HEK293 (cell line): ENCODE measurements at regions of chr5 and their contacts with region 1.

Region 1: DNA sequence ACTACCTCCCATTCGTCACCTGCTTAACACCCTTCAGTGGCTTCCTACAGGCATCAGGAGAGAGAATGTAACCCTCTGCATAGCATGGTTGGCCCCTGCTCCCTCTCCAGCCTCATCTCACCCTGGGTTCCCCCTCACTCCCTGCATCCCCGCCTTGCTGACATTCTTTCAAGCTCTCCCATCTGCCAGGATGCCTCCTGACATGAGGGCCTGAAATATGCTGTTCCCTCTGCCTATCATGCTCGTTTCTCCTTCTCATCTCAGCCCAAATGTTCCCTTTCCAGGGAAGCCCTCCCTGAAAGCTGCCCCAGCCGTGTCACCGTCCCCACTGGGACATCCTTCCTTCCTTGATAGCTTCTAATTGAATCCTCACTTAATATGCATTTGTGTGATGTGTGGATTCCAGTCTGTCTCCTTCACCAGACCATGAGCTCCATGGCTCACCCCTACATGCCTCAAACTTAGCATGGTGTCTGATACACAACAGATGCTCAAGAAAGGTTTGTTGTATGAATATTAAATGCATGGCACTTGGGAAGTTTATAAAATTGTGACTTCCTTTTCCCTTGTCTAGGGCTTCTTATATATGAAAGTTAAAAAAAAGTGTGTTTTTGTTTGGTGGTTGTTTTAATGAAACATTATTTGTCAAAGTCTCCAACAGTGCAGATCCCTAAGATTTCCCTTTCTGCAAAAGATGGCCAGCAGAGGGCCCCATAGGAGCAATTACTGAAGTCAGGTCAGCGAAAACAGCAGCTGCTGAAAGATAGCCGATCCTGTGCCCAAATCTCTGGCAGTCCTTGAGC is 7.3 kb upstream of the C5orf58 start:
- H3K4me3 ChIP-seq: no peak overlapping the region
- H3K27ac ChIP-seq: no peak overlapping the region
- H3K4me1 ChIP-seq: no peaks in the 10 kb centered on the region
- CTCF ChIP-seq: 0 out of 2 replicates have a peak, but pooled peaks have one; percentile 27

Region 2: GRCh38 chr5:170235876-170236864 is 10.6 kb after region 1 on chr5:
- CTCF ChIA-PET with region 1: interaction called, 38 read pairs
- POLR2A ChIA-PET with region 1: no interaction called
- H3K4me3 ChIP-seq: no peak overlapping the region
- H3K27ac ChIP-seq: no peak overlapping the region
- H3K4me1 ChIP-seq: no peaks in the 10 kb centered on the region
- CTCF ChIP-seq: no peak

Region 3: DNA sequence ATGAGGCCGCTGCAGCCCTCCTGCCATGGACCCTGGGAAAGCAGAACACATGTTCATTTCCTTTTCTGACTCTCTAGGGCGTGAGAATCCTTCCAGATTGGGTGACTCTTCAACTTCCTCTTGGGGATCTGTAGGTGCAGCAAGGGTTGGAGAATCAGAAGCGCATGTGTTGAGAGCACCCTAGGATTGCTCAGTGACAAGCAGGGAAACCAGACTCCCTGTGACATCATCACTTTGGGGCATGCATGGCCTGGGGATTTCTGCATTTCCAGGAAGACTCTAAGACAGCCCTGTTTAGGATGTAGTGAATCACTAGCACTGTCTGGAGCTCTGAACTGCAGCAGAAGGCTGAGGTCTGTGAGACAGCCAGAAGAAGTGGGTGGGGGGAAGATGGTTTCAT is 87.1 kb after region 1 on chr5:
- CTCF ChIA-PET with region 1: no interaction called
- POLR2A ChIA-PET with region 1: no interaction called
- H3K4me3 ChIP-seq: no peak overlapping the region
- H3K27ac ChIP-seq: no peak overlapping the region
- H3K4me1 ChIP-seq: no peaks in the 10 kb centered on the region
- CTCF ChIP-seq: no peak

Region 4: GRCh38 chr5:170362102-170362501 is 136.6 kb after region 1 on chr5:
- CTCF ChIA-PET with region 1: no interaction called
- POLR2A ChIA-PET with region 1: no interaction called
- H3K4me3 ChIP-seq: no peak overlapping the region
- H3K27ac ChIP-seq: no peak overlapping the region
- H3K4me1 ChIP-seq: no peaks in the 10 kb centered on the region
- CTCF ChIP-seq: no peak

Region 5: DNA sequence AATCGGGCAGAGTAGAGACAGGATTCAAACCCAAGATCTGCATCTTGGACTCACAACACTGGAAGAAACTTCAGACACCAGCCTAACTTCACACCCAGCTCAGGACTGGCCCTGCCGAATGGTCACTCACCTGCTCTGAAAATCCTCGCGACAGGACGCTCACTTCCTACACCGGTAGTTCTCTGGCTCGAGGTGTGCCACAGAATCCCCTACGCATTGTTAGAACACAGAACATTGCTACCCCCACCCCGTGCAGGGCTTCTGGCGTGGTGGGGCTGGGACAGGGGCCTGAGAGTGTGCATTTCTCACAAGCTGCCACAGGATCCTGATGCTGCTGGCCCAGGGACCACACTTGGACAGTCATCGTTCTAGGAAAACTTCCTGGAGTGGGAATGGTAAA is 151.5 kb after region 1 on chr5:
- CTCF ChIA-PET with region 1: no interaction called
- POLR2A ChIA-PET with region 1: no interaction called
- H3K4me3 ChIP-seq: no peak overlapping the region
- H3K27ac ChIP-seq: no peak overlapping the region
- H3K4me1 ChIP-seq: no peaks in the 10 kb centered on the region
- CTCF ChIP-seq: no peak

Region 6: GRCh38 chr5:170420780-170421412 is 195.4 kb after region 1 on chr5:
- CTCF ChIA-PET with region 1: interaction called, 66 read pairs
- POLR2A ChIA-PET with region 1: no interaction called
- H3K4me3 ChIP-seq: no peak overlapping the region
- H3K27ac ChIP-seq: no peak overlapping the region
- H3K4me1 ChIP-seq: no peaks in the 10 kb centered on the region
- CTCF ChIP-seq: peak; percentile 44; the same call in 1 of the 2 replicates

Region 7: DNA sequence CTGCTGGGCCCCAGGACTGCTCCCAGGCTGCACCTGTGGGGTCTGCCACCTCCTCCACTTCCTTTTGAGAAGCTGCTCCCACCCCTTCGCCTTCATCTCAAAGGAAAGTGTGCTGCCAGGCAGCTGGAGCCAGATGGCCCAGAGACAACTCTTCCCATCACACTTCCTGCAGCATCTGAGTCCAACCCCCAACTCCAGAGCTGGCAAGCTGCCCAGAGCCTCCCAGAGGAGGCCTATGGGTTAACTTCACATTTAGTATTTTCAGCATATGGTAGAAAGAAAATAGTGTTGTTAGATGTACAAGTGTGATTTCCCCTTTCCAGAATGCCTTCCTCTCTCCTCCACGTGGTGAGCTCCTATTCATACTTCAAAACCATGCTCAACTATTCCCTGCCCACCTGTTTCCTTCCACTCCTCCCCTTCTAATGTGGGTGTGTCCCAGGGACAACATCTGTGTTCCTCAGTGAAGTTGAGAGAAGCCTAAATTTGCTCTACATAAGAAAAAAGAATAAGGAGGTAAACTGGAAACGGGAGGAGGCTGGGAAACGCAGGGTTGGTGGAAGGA is 202.2 kb after region 1 on chr5:
- CTCF ChIA-PET with region 1: interaction called, 66 read pairs
- POLR2A ChIA-PET with region 1: no interaction called
- H3K4me3 ChIP-seq: no peak overlapping the region
- H3K27ac ChIP-seq: no peak overlapping the region
- H3K4me1 ChIP-seq: 0 out of 2 replicates have a peak, but pooled peaks cover 4% of the 10 kb centered on the region
- CTCF ChIP-seq: no peak